Activated T-helper 1 cell treated with anti-CD3 and anti-CD28 coated beads, Interleukin-12 subunit alpha, Interleukin-12 subunit beta, Interleukin-2, Interleukin-4 antibody, amounts not matched to agents 30 ng/mL and 10 ng/mL and 1 ng/mL, durations not matched to agents 14 hours and 24 hours and 36 hours (primary cell): ENCODE measurements at regions of chr1 and their contacts with region 1.

Region 1: GRCh38 chr1:174159252-174160108 is at the start of gene RABGAP1L:
- DNase-seq: peak; percentile 89
- H3K4me3 Mint-ChIP-seq: peak within 1 kb of the TSS; percentile 96
- H3K27ac Mint-ChIP-seq: peak within 1 kb of the TSS; percentile 96
- H3K4me1 Mint-ChIP-seq: peaks cover 66% of the 10 kb centered on the region
- H3K27me3 Mint-ChIP-seq: no peaks in the 10 kb centered on the region
- total RNA-seq, gene RABGAP1L: 40.6 and 41.0 TPM in 2 replicates

Region 2: DNA sequence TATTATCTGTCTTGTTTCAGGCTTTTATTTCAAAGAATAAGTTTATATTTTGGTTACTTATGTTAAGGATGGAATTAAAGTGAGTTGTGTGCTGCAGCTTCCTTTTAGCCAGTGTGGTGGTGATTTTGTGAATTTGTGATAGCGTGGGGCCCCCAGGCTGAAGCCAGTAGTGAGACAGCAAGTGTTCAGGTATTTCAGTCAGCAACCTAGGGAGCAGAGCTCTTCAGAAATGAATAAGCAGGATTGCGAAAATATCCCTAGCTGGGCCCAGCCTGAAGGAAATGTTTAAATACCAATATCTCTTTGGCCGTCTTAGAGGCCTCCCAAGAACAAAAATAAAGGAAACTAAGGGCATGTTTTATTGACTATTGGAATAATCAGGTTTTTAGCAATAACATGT is 1889.8 kb before region 1 on chr1:
- intact Hi-C with region 1: loop called (anchors 5 kb)
- DNase-seq: no peak
- H3K4me3 Mint-ChIP-seq: peak overlapping the region; percentile 43
- H3K27ac Mint-ChIP-seq: peak overlapping the region; percentile 82
- H3K4me1 Mint-ChIP-seq: peaks cover 64% of the 10 kb centered on the region
- H3K27me3 Mint-ChIP-seq: no peaks in the 10 kb centered on the region

Region 3: GRCh38 chr1:172818841-172819527 is 1340.5 kb before region 1 on chr1:
- intact Hi-C with region 1: loop called (anchors 5 kb)
- DNase-seq: peak; percentile 37
- H3K4me3 Mint-ChIP-seq: peak overlapping the region; percentile 59
- H3K27ac Mint-ChIP-seq: peak overlapping the region; percentile 78
- H3K4me1 Mint-ChIP-seq: peaks cover 47% of the 10 kb centered on the region
- H3K27me3 Mint-ChIP-seq: peaks cover 5% of the 10 kb centered on the region

Region 4: DNA sequence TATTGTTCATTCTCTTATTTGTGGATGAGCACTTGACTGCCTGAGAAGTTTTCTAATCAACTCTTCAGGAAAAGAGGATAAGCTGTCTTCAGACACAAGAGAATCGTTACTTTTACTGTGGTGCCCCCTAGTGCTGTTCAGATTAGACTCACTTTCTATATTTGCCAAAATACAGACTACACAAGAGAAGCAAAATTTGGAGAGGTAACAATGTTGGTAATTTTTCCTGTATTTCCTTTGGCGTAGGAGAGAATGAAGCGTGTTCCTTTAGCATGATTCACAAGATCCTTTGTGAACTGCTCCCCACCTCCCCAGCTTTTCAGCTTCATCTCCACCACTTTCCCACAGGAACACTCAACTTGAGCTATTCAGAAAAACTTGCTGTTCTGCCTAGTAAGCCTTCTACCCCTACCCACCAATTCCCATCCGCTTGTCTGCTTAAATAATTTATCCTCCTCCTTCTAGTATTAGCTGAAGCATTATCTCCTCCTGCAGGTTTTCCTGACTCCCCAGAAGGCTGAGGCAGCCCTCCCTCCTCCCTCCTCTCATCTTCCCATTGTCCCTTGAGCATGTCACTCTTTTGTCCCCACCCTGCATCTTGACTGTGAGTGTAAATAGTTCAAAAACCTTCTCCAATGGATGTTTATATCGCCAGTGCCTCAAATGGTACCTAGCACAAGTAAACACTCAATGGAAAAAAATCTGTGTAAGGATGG is 956.9 kb before region 1 on chr1:
- intact Hi-C with region 1: loop called (anchors 5 kb)
- DNase-seq: no peak
- H3K4me3 Mint-ChIP-seq: no peak overlapping the region
- H3K27ac Mint-ChIP-seq: no peak overlapping the region
- H3K4me1 Mint-ChIP-seq: peaks cover 47% of the 10 kb centered on the region
- H3K27me3 Mint-ChIP-seq: peaks cover 16% of the 10 kb centered on the region

Region 5: DNA sequence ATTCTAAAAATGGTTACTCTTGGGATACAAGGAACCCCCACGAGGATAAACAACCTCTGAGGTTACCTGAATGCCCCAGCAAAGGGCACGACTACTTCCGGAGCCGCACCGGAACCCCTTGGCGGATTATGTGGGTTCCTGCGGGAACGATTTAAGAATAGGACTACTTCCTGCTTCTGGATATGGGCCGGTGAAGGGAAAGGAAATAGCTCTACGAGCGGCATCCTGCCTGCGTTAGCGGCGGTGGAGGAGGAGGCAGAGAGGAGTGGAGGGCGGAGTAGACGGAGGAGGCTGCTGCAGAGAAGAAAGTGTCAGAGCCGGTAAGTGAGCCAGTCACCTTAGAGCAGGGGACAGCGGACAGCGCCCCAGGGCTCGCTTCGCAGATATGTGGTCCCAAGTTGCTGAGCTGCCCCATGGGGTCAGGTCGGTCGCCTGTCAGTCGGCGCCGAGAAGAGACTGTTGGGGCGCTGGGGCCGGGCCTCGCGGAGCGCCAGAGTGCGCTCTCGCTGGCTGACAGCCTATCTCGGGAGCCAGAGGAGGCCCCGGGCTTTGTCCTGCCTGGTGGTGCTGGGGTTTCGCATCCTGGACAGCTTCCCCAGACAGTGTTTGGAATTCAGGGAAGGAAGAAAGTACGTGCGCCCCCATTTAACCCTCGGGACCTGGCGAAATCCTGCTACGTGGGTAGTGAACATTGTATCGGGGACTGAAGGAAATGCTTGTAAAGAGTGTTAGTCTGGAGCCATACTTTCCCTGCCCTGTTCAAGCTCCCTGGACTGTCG is 444.5 kb before region 1 on chr1 and contains the start of gene KLHL20:
- intact Hi-C with region 1: loop called (anchors 2 kb)
- DNase-seq: peak; percentile 84
- H3K4me3 Mint-ChIP-seq: peak within 1 kb of the TSS; percentile 93
- H3K27ac Mint-ChIP-seq: peak within 1 kb of the TSS; percentile 98
- H3K4me1 Mint-ChIP-seq: peaks cover 30% of the 10 kb centered on the region
- H3K27me3 Mint-ChIP-seq: peaks cover 14% of the 10 kb centered on the region
- total RNA-seq, gene KLHL20: 17.8 and 18.3 TPM in 2 replicates

Region 6: DNA sequence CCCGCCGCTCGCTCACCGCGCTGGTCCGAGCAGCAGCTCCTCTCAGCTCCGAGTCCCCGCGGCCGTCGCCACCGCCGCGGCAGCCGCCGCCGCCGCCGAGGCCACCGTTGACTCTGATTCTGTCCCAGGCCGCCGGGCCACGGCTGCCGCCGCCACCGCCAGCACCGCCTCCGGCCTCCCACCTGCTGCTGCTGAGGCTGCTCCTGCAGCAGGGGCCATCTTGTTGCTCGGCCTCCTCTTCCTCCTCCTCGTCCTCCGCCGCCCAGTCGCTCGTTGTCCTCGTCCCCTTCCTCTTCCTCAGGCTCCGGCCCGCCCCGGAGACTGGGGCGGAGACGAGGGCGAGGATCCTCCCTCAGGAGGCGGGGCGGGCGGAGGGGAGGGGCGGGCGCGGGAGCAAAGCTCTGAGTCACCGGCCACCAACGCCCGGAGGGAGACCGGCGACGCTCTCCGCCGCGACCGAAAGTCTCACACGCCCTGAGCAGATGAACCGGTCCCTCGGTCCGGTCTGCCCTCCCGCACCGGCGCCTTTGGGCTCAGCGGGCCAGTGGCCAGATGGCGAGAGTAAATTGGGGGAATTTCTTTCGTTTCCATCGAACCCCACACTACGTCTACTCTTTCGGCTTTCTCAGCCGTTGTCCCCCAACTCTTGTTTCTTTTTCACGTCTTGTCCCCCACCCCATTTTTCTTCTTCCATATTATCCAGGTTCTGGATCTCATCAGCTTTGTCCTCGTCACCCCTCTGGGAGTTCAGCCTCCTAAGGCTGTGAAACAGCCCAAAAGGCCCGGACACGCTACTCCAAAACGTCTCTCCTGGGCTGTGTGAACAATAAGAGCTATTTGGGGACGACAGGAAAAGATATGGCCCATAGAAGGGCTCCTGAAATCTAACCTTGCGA is 137.2 kb before region 1 on chr1 and contains the start of gene RC3H1:
- intact Hi-C with region 1: loop called (anchors 1 kb)
- DNase-seq: peak; percentile 84
- H3K4me3 Mint-ChIP-seq: peak within 1 kb of the TSS; percentile 99
- H3K27ac Mint-ChIP-seq: peak within 1 kb of the TSS; percentile 96
- H3K4me1 Mint-ChIP-seq: peaks cover 42% of the 10 kb centered on the region
- H3K27me3 Mint-ChIP-seq: peaks cover 2% of the 10 kb centered on the region
- total RNA-seq, gene RC3H1: 47.1 and 49.5 TPM in 2 replicates

Region 7: DNA sequence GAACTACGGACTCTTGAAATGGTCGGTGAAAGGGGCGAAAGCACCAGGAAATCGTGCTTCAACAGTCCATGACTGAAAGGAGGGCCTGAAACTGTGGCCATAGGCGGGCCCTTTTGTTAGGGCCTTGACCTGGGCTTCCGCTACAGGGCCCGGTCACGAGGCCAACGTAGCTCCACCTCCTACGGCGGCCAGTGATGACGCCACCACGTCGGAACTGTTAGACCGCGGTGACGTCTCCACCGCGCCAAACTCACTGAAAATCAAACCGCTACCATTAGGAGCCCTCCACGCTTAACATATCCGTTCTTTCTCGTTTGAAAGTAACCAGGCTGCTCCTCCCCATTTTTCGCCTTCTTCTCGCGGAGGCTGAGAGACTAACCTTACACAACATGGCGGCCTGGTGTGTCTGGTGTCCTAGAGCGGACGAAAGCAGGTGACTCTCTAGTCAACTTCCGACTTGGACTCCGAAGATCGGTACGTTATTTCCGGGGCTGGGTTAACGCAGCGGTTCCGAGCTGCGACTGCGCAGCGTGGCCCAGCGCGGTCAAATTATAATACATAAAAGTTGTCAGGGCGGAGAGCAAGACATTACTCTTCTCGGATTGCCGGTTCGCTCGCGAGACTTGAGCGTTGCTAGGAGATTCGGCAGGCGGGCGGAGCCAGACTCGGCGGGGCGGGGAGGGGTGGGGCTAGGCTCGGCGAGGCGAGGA is 839.9 kb after region 1 on chr1:
- intact Hi-C with region 1: loop called (anchors 1 kb)
- DNase-seq: peak; percentile 96
- H3K4me3 Mint-ChIP-seq: no peak overlapping the region
- H3K27ac Mint-ChIP-seq: no peak overlapping the region
- H3K4me1 Mint-ChIP-seq: peaks cover 29% of the 10 kb centered on the region
- H3K27me3 Mint-ChIP-seq: no peaks in the 10 kb centered on the region